MCF 10A (cell line): ENCODE measurements at regions of chr20 and their contacts with region 1.

Region 1: GRCh38 chr20:8722276-8722928 is 346.5 kb upstream of the PLCB4 start:
- DNase-seq: peak; percentile 75
- H3K4me3 Mint-ChIP-seq: no peak overlapping the region
- H3K27ac Mint-ChIP-seq: no peak overlapping the region
- H3K4me1 Mint-ChIP-seq: peaks cover 11% of the 10 kb centered on the region
- H3K27me3 Mint-ChIP-seq: no peaks in the 10 kb centered on the region
- CTCF ChIP-seq: peak; percentile 75

Region 2: GRCh38 chr20:7935027-7935551 is 787.3 kb before region 1 on chr20:
- CTCF ChIA-PET with region 1: interaction called, 277 read pairs
- POLR2A ChIA-PET with region 1: interaction called, 19 read pairs
- intact Hi-C with region 1: loop called (anchors 1 kb)
- DNase-seq: no peak
- H3K4me3 Mint-ChIP-seq: no peak overlapping the region
- H3K27ac Mint-ChIP-seq: no peak overlapping the region
- H3K4me1 Mint-ChIP-seq: no peaks in the 10 kb centered on the region
- H3K27me3 Mint-ChIP-seq: no peaks in the 10 kb centered on the region
- CTCF ChIP-seq: no peak

Region 3: GRCh38 chr20:7980332-7981046 is 741.9 kb before region 1 on chr20:
- CTCF ChIA-PET with region 1: interaction called, 35 read pairs
- POLR2A ChIA-PET with region 1: interaction called, 4 read pairs
- intact Hi-C with region 1: loop called (anchors 1 kb)
- DNase-seq: peak; percentile 41
- H3K4me3 Mint-ChIP-seq: no peak overlapping the region
- H3K27ac Mint-ChIP-seq: no peak overlapping the region
- H3K4me1 Mint-ChIP-seq: no peaks in the 10 kb centered on the region
- H3K27me3 Mint-ChIP-seq: no peaks in the 10 kb centered on the region
- CTCF ChIP-seq: peak; percentile 44

Region 4: DNA sequence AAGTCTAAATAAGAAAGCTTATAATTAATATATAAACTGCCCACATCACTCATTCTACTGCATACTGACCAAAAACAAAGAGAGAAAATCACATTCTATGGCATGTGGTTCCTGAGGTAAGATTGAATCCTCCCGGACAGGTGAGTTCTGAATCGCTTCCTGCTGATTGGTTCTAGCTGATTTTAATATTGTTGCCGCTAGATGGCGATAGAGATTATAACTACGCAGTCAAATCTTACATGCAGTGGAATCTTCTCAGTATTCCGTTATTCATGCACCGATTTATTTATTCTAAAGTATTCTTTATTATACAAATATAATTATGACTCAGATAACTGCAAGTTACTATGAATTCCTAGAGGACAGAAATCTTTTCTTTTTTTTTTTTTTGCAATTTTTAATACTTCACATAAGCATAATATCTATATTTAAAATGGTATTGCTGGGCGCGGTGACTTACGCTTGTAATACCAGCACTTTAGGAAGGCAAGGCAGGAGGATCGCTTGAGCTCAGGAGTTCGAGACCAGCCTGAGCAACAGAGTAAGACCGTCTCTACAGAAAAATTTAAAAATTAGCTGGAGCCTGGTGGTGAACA is 678.6 kb before region 1 on chr20:
- CTCF ChIA-PET with region 1: interaction called, 322 read pairs
- POLR2A ChIA-PET with region 1: interaction called, 19 read pairs
- intact Hi-C with region 1: loop called (anchors 1 kb)
- DNase-seq: peak; percentile 65
- H3K4me3 Mint-ChIP-seq: no peak overlapping the region
- H3K27ac Mint-ChIP-seq: no peak overlapping the region
- H3K4me1 Mint-ChIP-seq: no peaks in the 10 kb centered on the region
- H3K27me3 Mint-ChIP-seq: peaks cover 14% of the 10 kb centered on the region
- CTCF ChIP-seq: peak; percentile 65

Region 5: DNA sequence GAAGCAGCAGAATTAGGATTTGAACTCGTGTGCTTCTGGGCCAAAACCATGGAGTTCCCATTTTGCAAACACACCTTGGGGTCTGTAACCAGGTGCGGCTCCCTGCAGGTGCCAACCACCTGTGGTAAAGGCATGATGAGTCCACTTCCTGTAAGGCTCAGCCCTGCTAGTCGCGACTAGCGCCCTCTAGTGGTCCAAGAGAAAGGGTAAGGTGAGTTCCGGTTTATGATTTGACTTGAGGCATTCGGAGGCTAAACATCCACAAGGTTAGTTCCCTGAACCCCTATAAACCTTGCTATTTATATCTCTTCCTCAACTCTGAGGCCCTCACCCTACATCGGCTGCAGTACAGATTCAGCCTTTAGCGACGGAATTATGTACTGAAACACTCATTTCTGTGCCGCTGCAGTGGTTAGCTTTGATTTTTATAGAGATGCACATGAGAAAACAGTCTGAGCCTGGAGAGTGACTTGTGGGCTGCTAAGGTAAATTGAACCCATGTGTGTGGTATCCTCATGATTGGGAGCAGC is 416.9 kb before region 1 on chr20:
- CTCF ChIA-PET with region 1: interaction called, 14 read pairs
- POLR2A ChIA-PET with region 1: no interaction called
- intact Hi-C with region 1: no loop called
- DNase-seq: peak; percentile 79
- H3K4me3 Mint-ChIP-seq: no peak overlapping the region
- H3K27ac Mint-ChIP-seq: no peak overlapping the region
- H3K4me1 Mint-ChIP-seq: no peaks in the 10 kb centered on the region
- H3K27me3 Mint-ChIP-seq: no peaks in the 10 kb centered on the region
- CTCF ChIP-seq: peak; percentile 54

Region 6: GRCh38 chr20:8498571-8498970 is 223.8 kb before region 1 on chr20:
- CTCF ChIA-PET with region 1: interaction called, 10 read pairs
- POLR2A ChIA-PET with region 1: no interaction called
- intact Hi-C with region 1: no loop called
- DNase-seq: no peak
- H3K4me3 Mint-ChIP-seq: no peak overlapping the region
- H3K27ac Mint-ChIP-seq: no peak overlapping the region
- H3K4me1 Mint-ChIP-seq: no peaks in the 10 kb centered on the region
- H3K27me3 Mint-ChIP-seq: no peaks in the 10 kb centered on the region
- CTCF ChIP-seq: no peak

Region 7: GRCh38 chr20:8709627-8710026 is 12.8 kb before region 1 on chr20:
- CTCF ChIA-PET with region 1: interaction called, 138 read pairs
- POLR2A ChIA-PET with region 1: no interaction called
- intact Hi-C with region 1: no loop called
- DNase-seq: peak; percentile 17
- H3K4me3 Mint-ChIP-seq: no peak overlapping the region
- H3K27ac Mint-ChIP-seq: no peak overlapping the region
- H3K4me1 Mint-ChIP-seq: no peaks in the 10 kb centered on the region
- H3K27me3 Mint-ChIP-seq: no peaks in the 10 kb centered on the region
- CTCF ChIP-seq: no peak

Region 8: DNA sequence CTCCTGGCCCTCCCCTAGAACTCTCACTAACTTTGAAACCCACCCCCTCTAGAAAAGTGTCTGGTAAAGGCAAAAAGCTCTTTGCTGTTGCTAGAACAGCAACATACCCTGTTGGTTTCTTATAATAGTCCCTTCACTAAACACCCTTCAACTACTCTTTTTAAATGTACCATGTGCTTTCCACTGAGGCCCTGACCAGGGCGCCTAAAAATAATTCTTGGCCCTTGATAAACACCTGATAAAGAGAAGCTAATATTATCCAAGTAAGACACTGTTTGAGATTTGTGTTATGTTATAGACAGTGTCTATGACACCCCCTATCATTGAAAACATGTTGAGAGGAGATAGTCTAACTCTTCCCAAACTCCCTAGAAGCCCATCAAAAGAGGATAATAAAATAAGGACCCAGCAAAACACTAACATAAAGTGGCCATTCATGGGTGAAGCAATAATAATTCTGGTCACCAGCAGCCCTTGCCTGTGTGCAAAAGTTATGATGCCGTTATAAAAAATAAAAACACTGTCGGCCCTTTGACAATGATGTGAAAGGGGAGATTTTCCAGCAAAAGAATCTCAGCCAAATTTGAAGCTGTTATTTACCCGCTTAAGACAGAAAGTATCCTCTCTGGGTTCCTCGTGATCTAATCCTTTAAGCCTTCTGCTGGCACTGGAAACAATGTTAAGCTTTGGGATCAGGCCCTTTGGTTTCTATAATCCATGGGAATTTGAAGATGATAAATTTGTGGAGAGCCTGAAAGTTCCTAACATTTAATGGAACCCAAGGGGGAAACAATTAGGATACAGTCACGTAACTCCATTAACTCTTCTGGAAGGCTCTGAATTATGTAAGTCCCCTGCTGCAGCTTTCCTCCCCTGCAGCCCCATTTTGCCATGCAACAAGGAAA is 223.9 kb after region 1 on chr20:
- CTCF ChIA-PET with region 1: no interaction called
- POLR2A ChIA-PET with region 1: no interaction called
- intact Hi-C with region 1: no loop called
- DNase-seq: no peak
- H3K4me3 Mint-ChIP-seq: no peak overlapping the region
- H3K27ac Mint-ChIP-seq: no peak overlapping the region
- H3K4me1 Mint-ChIP-seq: no peaks in the 10 kb centered on the region
- H3K27me3 Mint-ChIP-seq: no peaks in the 10 kb centered on the region
- CTCF ChIP-seq: no peak